ENCODE measurements at regions of chr19 and their contacts with region 1.

Region 1: GRCh38 chr19:40139533-40140287 is 49.0 kb upstream of the ZNF780A start:
- DNase-seq: peak; percentile 73
- H3K4me3 ChIP-seq: no peak overlapping the region
- H3K27ac ChIP-seq: no peak overlapping the region
- H3K4me1 ChIP-seq: peaks cover 24% of the 10 kb centered on the region
- H3K27me3 ChIP-seq: no peaks in the 10 kb centered on the region
- CTCF ChIP-seq: peak; percentile 80

Region 2: GRCh38 chr19:40081411-40081810 is 58.3 kb before region 1 on chr19:
- CTCF ChIA-PET with region 1: no interaction called
- POLR2A ChIA-PET with region 1: no interaction called
- intact Hi-C with region 1: no loop called
- DNase-seq: no peak
- H3K4me3 ChIP-seq: no peak overlapping the region
- H3K27ac ChIP-seq: no peak overlapping the region
- H3K4me1 ChIP-seq: no peaks in the 10 kb centered on the region
- H3K27me3 ChIP-seq: no peaks in the 10 kb centered on the region
- CTCF ChIP-seq: no peak

Region 3: GRCh38 chr19:40159744-40160143 is 20.0 kb after region 1 on chr19:
- CTCF ChIA-PET with region 1: no interaction called
- POLR2A ChIA-PET with region 1: no interaction called
- intact Hi-C with region 1: no loop called
- DNase-seq: no peak
- H3K4me3 ChIP-seq: no peak overlapping the region
- H3K27ac ChIP-seq: no peak overlapping the region
- H3K4me1 ChIP-seq: no peaks in the 10 kb centered on the region
- H3K27me3 ChIP-seq: no peaks in the 10 kb centered on the region
- CTCF ChIP-seq: no peak

Region 4: GRCh38 chr19:40529093-40529954 is 389.6 kb after region 1 on chr19:
- CTCF ChIA-PET with region 1: no interaction called
- POLR2A ChIA-PET with region 1: no interaction called
- intact Hi-C with region 1: loop called (anchors 10 kb)
- DNase-seq: peak; percentile 92
- H3K4me3 ChIP-seq: peak overlapping the region; percentile 30
- H3K27ac ChIP-seq: no peak overlapping the region
- H3K4me1 ChIP-seq: peaks cover 15% of the 10 kb centered on the region
- H3K27me3 ChIP-seq: no peaks in the 10 kb centered on the region
- CTCF ChIP-seq: peak; percentile 97

Measured in A673 (cell line).